ENCODE measurements at regions of chr3 and their contacts with region 1.

Region 1: GRCh38 chr3:32733631-32734229 is 48.7 kb downstream of the CNOT10 start:
- DNase-seq: no peak
- H3K4me3 ChIP-seq: no peak overlapping the region
- H3K27ac ChIP-seq: no peak overlapping the region
- H3K4me1 ChIP-seq: no peaks in the 10 kb centered on the region
- H3K27me3 ChIP-seq: no peaks in the 10 kb centered on the region
- CTCF ChIP-seq: peak; percentile 45

Region 2: GRCh38 chr3:32781210-32781968 is 47.7 kb after region 1 on chr3:
- intact Hi-C with region 1: loop called (anchors 5 kb)
- DNase-seq: peak; percentile 77
- H3K4me3 ChIP-seq: peak overlapping the region; percentile 51
- H3K27ac ChIP-seq: no peak overlapping the region
- H3K4me1 ChIP-seq: no peaks in the 10 kb centered on the region
- H3K27me3 ChIP-seq: no peaks in the 10 kb centered on the region
- CTCF ChIP-seq: peak; percentile 74

Region 3: GRCh38 chr3:32934150-32934742 is 200.5 kb after region 1 on chr3:
- intact Hi-C with region 1: loop called (anchors 5 kb)
- DNase-seq: peak; percentile 26
- H3K4me3 ChIP-seq: no peak overlapping the region
- H3K27ac ChIP-seq: no peak overlapping the region
- H3K4me1 ChIP-seq: no peaks in the 10 kb centered on the region
- H3K27me3 ChIP-seq: no peaks in the 10 kb centered on the region
- CTCF ChIP-seq: peak; percentile 59